ENCODE measurements at regions of chr10 and their contacts with region 1.

Region 1: GRCh38 chr10:71569775-71570588 is 149.6 kb downstream of the C10orf105 start:
- DNase-seq: peak; percentile 56 to 76
- ATAC-seq: peak; percentile 66 to 85; a peak in 4 of 6 replicates
- H3K4me3 ChIP-seq: no peak overlapping the region
- H3K27ac ChIP-seq: no peak overlapping the region
- H3K4me1 ChIP-seq: no peaks in the 10 kb centered on the region
- CTCF ChIP-seq: peak; percentile 86
- EP300 ChIP-seq: no peak
- POLR2A ChIP-seq: no peak
- RAD21 ChIP-seq: peak; percentile 78 to 81

Region 2: GRCh38 chr10:71314028-71314693 is 255.8 kb before region 1 on chr10:
- CTCF ChIA-PET with region 1: interaction called, 69 read pairs
- POLR2A ChIA-PET with region 1: interaction called, 6 read pairs
- DNase-seq: peak; percentile 55 to 70
- ATAC-seq: peak; percentile 52 to 77; a peak in 3 of 6 replicates
- H3K4me3 ChIP-seq: no peak overlapping the region
- H3K27ac ChIP-seq: peak overlapping the region; percentile 39 to 77; a peak in 5 of 6 replicates
- H3K4me1 ChIP-seq: 0 out of 3 replicates have a peak, but pooled peaks cover 3% of the 10 kb centered on the region
- CTCF ChIP-seq: peak; percentile 93
- EP300 ChIP-seq: no peak
- POLR2A ChIP-seq: no peak
- RAD21 ChIP-seq: peak; percentile 87 to 98

Region 3: GRCh38 chr10:71396084-71396720 is 173.8 kb before region 1 on chr10:
- CTCF ChIA-PET with region 1: interaction called, 163 read pairs
- POLR2A ChIA-PET with region 1: no interaction called
- DNase-seq: peak; percentile 75 to 76
- ATAC-seq: peak; percentile 86 to 94
- H3K4me3 ChIP-seq: peak overlapping the region; percentile 58
- H3K27ac ChIP-seq: peak overlapping the region; percentile 71 to 91
- H3K4me1 ChIP-seq: peaks cover 7% of the 10 kb centered on the region; the same call in 1 of the 3 replicates
- CTCF ChIP-seq: peak; percentile 77
- EP300 ChIP-seq: no peak
- POLR2A ChIP-seq: no peak
- RAD21 ChIP-seq: peak; percentile 80 to 92

Region 4: GRCh38 chr10:71554671-71555070 is 15.3 kb before region 1 on chr10:
- CTCF ChIA-PET with region 1: interaction called, 15 read pairs
- POLR2A ChIA-PET with region 1: no interaction called
- DNase-seq: no peak
- ATAC-seq: no peak
- H3K4me3 ChIP-seq: no peak overlapping the region
- H3K27ac ChIP-seq: no peak overlapping the region
- H3K4me1 ChIP-seq: no peaks in the 10 kb centered on the region
- CTCF ChIP-seq: no peak
- EP300 ChIP-seq: no peak
- POLR2A ChIP-seq: no peak
- RAD21 ChIP-seq: no peak

Region 5: DNA sequence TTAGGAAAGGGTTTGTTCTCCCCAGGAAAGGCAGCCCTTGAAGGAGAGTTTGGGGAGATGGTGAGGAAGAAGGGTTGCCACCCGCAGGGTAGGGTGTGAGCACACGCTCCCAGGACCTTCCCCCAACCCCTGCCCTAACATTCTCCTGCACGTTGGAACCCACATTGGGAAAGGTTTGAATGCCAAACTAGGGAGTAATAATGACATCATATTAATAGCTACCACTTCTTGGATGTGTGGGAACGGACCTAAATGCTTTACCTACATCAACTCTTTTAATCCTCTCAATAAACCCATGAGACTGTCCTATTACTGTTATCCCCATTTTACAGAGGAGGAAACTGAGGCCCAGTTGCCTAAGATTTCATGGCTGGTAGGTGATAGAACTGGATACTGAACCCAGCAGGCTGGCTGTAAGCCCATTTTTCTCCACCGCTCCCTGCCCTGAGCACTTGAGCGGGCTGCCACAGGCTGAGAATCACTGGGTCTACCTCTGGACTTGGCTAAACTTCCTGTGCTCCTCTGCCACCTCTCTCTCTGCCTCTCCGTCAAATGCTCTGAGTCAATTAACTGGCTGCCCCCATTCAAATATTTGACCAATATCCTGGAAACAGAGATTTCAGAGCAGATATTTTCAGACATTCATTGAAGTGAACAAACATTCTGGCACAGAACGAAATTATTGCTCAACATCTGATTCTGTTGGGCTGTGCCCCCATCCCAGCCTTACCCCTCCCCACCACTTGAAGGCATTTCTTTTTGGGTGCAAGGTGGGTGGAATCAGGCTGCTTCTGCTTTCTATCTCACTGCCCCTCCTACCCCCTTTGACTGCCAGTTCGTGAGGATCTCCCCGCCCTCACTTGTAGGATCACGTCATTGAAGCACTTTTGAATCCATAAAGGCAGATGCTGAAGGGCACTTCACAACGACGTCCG is 19.9 kb after region 1 on chr10:
- CTCF ChIA-PET with region 1: interaction called, 57 read pairs
- POLR2A ChIA-PET with region 1: no interaction called
- DNase-seq: no peak
- ATAC-seq: no peak
- H3K4me3 ChIP-seq: no peak overlapping the region
- H3K27ac ChIP-seq: no peak overlapping the region
- H3K4me1 ChIP-seq: no peaks in the 10 kb centered on the region
- CTCF ChIP-seq: no peak
- EP300 ChIP-seq: no peak
- POLR2A ChIP-seq: no peak
- RAD21 ChIP-seq: no peak

Region 6: DNA sequence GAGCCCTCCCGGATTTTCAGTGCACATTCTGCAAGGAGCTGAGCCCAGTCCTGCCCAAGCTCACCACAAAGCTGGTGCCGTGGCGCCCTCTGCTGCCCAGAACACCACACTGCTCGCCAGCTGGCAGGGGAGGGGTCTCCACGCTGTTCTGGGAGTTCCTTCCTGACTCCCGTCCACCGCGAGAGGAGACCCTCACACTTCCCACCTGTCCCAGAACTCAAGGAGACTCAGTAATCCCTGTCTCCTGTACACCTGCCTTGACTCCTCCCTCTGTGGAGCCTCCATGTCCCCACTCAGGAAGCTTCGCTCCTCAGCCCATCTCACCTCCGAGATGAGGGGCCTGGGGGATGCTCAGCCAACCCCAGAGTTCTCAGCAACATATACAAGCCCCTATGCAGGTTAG is 138.3 kb after region 1 on chr10:
- CTCF ChIA-PET with region 1: interaction called, 14 read pairs
- POLR2A ChIA-PET with region 1: no interaction called
- DNase-seq: peak; percentile 41 to 42
- ATAC-seq: peak; percentile 66 to 87
- H3K4me3 ChIP-seq: no peak overlapping the region
- H3K27ac ChIP-seq: peak overlapping the region in 1 of 2 experiments; percentile 52; a peak in 3 of 6 replicates
- H3K4me1 ChIP-seq: peaks cover 11% of the 10 kb centered on the region
- CTCF ChIP-seq: peak; percentile 74
- EP300 ChIP-seq: no peak
- POLR2A ChIP-seq: no peak
- RAD21 ChIP-seq: peak; percentile 79 to 83